ENCODE measurements at regions of chr16 and their contacts with region 1.

Region 1: GRCh38 chr16:89860747-89861304 is 12.6 kb upstream of the TCF25 start:
- DNase-seq: peak; percentile 54 to 86 (median 85)
- ATAC-seq: peak; percentile 74 to 78
- H3K4me3 ChIP-seq: no peak overlapping the region
- H3K27ac ChIP-seq: no peak overlapping the region
- H3K4me1 ChIP-seq: no peaks in the 10 kb centered on the region
- H3K27me3 ChIP-seq: no peaks in the 10 kb centered on the region

Region 2: DNA sequence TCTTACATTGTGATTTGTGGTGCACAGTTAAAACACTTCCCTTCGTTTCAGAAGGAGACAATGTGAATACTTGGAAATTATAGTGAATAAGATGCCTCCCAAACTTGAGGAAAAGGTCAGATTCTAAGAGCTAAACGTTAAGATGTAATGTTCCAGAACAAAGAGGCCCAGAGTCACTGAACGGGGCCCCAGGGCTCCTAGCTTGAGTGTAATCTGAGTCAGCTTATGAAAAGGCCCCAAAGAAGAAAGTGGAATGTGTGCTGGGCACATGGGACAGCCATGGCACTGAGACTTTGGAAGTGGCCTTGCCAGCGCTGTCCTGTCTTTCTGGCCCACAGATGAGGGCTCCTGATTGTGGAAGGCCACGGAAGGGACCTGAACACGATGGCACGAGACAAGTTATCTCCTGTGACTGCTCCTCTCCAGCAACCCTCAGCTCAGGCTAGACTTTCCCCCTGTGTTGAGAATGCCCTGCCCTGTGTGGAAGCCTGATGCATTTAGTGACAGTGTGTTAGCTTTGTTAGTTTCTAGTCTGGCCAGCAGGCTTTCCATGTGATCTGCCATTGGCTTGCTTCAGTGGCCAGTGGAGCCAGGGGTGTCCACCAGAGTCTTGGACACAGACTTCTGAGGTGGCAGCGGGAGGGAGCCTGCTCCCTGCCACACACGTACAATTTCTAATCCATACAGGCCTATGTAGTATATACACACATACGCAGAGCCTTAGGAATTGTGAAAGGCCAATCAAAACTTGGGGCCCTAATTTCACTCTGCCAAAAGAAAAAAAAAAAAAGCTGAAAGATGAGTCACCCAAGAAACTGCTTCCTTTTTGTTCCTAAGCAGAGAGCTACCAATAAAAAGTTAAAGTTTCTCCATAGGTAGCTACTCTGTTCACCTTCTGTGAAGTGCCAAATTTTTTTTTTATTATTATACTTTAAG is 190.1 kb before region 1 on chr16:
- intact Hi-C with region 1: no loop called
- DNase-seq: no peak
- ATAC-seq: peak in 1 of 2 donors; percentile 29
- H3K4me3 ChIP-seq: no peak overlapping the region
- H3K27ac ChIP-seq: no peak overlapping the region
- H3K4me1 ChIP-seq: no peaks in the 10 kb centered on the region
- H3K27me3 ChIP-seq: no peaks in the 10 kb centered on the region

Region 3: DNA sequence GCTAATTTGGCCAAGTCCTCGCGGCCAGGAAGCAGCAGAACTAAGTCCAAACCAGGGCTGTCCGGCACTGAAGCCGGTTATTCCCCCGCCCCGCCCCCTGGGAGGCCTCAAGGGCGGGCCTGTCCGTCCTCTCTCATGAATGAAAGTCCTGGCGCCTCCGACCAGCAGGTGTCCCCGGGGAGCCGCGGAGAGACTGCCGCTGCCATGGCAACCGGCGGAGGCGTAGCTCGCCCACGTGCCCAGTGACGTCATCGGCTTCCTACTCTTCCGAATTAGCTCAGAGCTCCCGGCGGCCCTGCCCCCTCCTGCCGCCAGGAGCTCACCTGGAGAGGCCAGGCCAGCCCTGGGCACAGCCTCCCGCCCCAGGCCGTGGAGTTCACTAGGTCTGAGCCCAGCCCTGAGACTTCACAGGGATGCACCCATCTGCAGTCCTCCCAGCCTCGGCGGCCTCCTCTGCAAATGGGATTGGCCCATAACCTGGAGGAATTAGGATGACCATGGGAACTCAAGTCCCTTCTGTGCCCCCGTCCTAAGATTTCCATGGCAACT is 160.7 kb before region 1 on chr16:
- intact Hi-C with region 1: loop called in 2 of 4 experiments (anchors 5 to 10 kb)
- DNase-seq: peak; percentile 99
- ATAC-seq: peak; percentile 82
- H3K4me3 ChIP-seq: peak overlapping the region; percentile 65
- H3K27ac ChIP-seq: peak overlapping the region; percentile 27
- H3K4me1 ChIP-seq: peaks cover 3% of the 10 kb centered on the region
- H3K27me3 ChIP-seq: no peaks in the 10 kb centered on the region

Region 4: GRCh38 chr16:89749647-89750046 is 111.2 kb before region 1 on chr16:
- intact Hi-C with region 1: loop called (anchors 5 to 10 kb)
- DNase-seq: peak; percentile 32 to 77 (median 74)
- ATAC-seq: peak; percentile 67 to 77
- H3K4me3 ChIP-seq: no peak overlapping the region
- H3K27ac ChIP-seq: no peak overlapping the region
- H3K4me1 ChIP-seq: no peaks in the 10 kb centered on the region
- H3K27me3 ChIP-seq: no peaks in the 10 kb centered on the region

Region 5: GRCh38 chr16:89775223-89775622 is 85.6 kb before region 1 on chr16:
- intact Hi-C with region 1: no loop called
- DNase-seq: no peak
- ATAC-seq: no peak
- H3K4me3 ChIP-seq: no peak overlapping the region
- H3K27ac ChIP-seq: no peak overlapping the region
- H3K4me1 ChIP-seq: no peaks in the 10 kb centered on the region
- H3K27me3 ChIP-seq: no peaks in the 10 kb centered on the region

Region 6: DNA sequence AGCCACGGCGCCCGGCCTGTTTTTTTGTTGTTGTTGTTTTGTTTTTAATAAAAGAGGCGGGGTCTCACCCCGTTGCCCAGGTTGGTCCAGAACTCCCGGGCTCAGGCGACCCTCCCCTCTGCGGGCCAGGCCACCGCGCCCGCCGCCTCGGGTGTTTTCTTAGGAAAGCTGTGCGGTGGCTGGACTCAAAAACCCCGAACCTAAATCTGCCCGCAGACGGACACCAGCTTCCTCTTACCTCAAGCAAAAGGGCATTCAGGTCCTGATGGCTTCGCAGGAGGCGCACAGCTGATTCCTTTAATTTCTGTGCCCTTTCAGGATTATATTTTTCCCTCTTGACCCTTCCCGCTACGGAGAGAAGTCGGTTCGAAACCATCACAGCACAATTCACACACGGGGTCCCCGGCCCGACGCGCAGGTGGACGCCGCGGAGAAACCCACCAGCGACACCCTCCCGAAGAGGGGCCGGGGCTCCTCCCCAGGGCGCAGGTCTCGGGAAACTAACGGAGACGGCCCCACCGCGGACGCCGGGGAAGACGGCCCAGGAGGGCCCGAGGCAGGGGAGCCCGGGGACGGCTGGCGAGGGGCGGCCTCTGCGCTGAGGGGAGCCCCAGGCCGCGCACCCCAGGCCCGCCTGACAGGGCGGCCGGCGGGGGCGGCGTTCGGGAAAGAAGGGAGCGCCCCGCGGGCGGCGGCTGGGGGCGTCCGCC is 45.0 kb before region 1 on chr16:
- intact Hi-C with region 1: loop called in 1 of 4 experiments (anchors 10 kb)
- DNase-seq: peak in 1 of 3 donors; percentile 33
- ATAC-seq: peak in 1 of 2 donors; percentile 4
- H3K4me3 ChIP-seq: peak overlapping the region; percentile 73
- H3K27ac ChIP-seq: no peak overlapping the region
- H3K4me1 ChIP-seq: no peaks in the 10 kb centered on the region
- H3K27me3 ChIP-seq: no peaks in the 10 kb centered on the region

Measured in right cardiac atrium (tissue), 5 donors.